GM10248 (cell line): ENCODE measurements at regions of chr3 and their contacts with region 1.

Region 1: GRCh38 chr3:151439652-151440129 is 21.2 kb downstream of the IGSF10 start:
- DNase-seq: peak; percentile 41
- CTCF ChIP-seq: peak; percentile 67

Region 2: DNA sequence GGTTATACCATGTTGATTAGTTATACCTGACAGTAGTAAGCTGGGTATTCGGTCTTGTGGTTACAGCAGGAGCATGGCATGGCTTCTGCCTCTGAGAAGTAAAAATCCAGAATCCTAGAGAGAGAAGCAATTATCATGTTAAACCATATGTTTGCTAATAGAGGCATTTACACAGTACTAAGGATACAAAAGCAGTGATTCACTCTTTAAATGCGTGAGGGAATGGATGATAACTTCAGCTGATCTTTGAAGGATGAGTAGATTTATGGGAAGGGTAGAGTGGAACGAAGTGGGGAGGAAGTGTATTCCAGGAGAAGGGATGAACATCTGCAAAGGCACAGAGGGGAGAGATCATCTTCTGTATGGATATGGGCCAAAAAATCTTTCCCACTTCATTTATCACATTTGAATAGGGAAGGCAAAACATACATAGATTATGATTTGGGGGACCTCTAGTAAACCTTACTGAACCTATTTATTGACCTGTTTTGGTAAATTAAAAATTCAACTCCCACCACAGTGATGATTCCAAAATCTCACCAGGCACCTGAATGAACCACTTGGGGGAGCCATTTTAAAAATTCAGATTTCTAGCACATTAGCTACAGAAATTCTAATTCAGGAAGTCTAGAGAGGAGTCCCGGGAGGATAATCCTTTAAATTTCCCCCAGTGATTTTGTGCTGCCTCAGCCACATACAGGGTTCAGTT is 13.9 kb before region 1 on chr3:
- CTCF ChIA-PET with region 1: interaction called, 22 read pairs
- POLR2A ChIA-PET with region 1: no interaction called
- DNase-seq: peak; percentile 20
- CTCF ChIP-seq: peak; percentile 22

Region 3: GRCh38 chr3:151568184-151568583 is 128.5 kb after region 1 on chr3:
- CTCF ChIA-PET with region 1: no interaction called
- POLR2A ChIA-PET with region 1: no interaction called
- DNase-seq: no peak
- CTCF ChIP-seq: no peak

Region 4: DNA sequence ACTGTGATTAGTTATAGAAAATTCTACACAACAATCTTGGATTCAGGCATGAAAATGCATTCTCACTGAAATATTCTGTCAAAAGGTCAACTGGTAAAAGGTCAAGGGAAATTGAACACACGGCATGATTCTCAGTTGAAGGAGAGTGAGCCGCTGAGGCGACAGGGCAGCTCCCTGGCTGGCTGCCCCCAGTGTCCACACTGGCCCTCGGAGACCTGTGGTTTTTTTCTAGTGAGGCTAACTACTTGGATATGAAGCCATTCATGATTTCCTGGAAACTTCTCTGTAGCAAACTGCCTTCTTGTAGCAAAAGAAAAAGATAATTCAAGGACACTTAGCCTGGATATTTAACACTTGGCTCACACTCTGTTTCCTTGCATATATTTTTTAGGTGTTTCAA is 331.3 kb after region 1 on chr3:
- CTCF ChIA-PET with region 1: no interaction called
- POLR2A ChIA-PET with region 1: no interaction called
- DNase-seq: no peak
- CTCF ChIP-seq: no peak

Region 5: DNA sequence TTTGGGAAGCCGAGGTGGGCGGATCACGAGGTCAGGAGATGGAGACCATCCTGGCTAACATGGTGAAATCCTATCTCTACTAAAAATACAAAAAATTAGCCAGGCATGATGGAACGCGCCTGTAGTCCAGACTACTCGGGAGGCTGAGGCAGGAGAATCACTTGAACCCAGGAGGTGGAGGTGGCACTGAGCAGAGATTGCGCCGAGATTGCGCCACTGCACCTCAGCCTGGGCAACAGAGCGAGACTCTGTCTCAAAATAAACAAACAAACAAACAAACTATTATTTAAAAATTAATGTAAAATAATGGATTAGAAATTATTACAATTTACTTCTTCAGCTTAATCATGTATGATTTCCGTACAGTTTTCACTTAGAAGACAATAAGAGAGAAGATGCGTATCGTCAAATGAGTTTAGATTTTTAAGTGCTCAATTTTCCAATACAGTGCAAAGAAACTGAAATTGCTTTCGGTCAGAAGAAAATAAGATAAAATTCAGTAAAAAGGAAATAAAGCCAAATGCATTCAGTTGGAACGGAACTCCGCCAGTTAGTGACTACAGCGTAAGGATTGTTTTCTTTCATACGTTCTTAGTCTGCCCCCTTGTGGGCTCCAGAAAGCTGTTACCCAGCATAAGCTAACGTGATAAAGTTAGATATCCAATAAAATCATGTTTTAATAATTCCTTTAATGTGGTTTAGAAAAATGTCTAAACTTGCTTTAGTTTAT is 399.1 kb after region 1 on chr3:
- CTCF ChIA-PET with region 1: interaction called, 37 read pairs
- POLR2A ChIA-PET with region 1: no interaction called
- DNase-seq: peak; percentile 43
- CTCF ChIP-seq: peak; percentile 76

Region 6: DNA sequence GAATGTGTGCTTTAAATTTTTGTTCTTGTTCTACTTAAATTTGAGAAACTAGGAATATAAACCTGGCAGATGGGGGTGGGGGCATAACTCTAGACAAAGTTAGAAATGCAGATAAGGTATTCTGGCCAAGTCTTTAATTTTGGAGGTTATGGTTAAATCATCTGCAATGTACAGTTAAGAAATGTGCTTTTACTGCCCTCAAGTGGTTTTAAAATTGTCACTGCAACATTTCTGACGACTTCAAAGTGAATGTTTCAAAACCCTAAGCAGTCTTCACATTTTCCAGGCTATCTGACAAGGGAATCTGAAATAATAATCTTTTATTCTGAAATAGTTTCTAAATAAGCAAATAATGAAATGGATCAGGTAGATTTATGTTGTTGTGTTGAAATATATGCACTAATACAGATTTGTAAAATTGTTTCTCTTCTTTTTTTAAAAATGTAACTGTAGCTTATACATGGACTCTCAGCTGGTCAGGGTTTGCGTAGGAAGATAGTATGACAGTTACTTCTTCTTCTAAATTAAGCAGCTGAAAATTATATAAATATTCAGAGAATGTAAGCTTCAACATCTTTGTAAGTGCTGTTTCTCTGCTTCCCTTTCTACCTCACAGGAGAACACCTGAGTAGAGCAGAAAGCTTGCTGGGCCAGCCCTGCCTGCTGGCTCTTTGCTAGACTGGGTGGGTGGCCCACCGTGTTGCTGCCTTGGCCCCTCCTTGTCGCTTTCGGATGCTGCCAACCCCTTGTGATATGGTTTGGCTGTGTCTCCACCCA is 478.8 kb after region 1 on chr3:
- CTCF ChIA-PET with region 1: interaction called, 14 read pairs
- POLR2A ChIA-PET with region 1: no interaction called
- DNase-seq: peak; percentile 55
- CTCF ChIP-seq: peak; percentile 59